Breast epithelium (tissue), 4 donors: ENCODE measurements at regions of chr2 and their contacts with region 1.

Region 1: GRCh38 chr2:225865468-225865867 is 466.0 kb downstream of the NYAP2 start:
- DNase-seq: no peak
- H3K4me3 ChIP-seq: no peak overlapping the region
- H3K27ac ChIP-seq: no peak overlapping the region
- H3K4me1 ChIP-seq: no peaks in the 10 kb centered on the region
- H3K27me3 ChIP-seq: no peaks in the 10 kb centered on the region
- CTCF ChIP-seq: no peak
- POLR2A ChIP-seq: no peak

Region 2: DNA sequence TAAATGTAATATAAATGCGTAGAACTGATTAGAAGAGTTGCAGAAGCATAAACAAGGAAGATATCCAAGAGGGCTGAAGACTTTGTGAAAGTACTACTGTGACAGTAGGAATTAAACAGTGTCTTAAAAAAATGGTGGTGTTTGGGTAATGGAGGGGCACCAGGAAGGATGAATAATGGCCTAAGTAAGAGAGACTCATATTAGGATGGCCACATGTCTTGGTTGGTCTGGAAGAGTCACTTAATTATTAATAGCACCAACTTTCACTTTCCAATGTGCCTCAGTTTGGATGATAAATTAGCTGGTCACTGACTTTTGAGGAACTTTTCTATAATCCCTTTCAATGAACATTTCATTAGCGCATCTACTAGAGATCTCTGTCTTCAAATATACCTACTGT is 93.8 kb before region 1 on chr2:
- intact Hi-C with region 1: no loop called
- DNase-seq: no peak
- H3K4me3 ChIP-seq: no peak overlapping the region
- H3K27ac ChIP-seq: no peak overlapping the region
- H3K4me1 ChIP-seq: no peaks in the 10 kb centered on the region
- H3K27me3 ChIP-seq: no peaks in the 10 kb centered on the region
- CTCF ChIP-seq: no peak
- POLR2A ChIP-seq: no peak

Region 3: GRCh38 chr2:225971433-225971832 is 106.0 kb after region 1 on chr2:
- intact Hi-C with region 1: no loop called
- DNase-seq: no peak
- H3K4me3 ChIP-seq: no peak overlapping the region
- H3K27ac ChIP-seq: no peak overlapping the region
- H3K4me1 ChIP-seq: no peaks in the 10 kb centered on the region
- H3K27me3 ChIP-seq: no peaks in the 10 kb centered on the region
- CTCF ChIP-seq: no peak
- POLR2A ChIP-seq: no peak

Region 4: GRCh38 chr2:226030788-226031646 is 165.5 kb after region 1 on chr2:
- intact Hi-C with region 1: loop called (anchors 5 kb)
- DNase-seq: peak; percentile 37 to 57
- H3K4me3 ChIP-seq: peak overlapping the region; percentile 41 to 77 (median 55)
- H3K27ac ChIP-seq: peak overlapping the region; percentile 30 to 68
- H3K4me1 ChIP-seq: no peaks in the 10 kb centered on the region
- H3K27me3 ChIP-seq: no peaks in the 10 kb centered on the region
- CTCF ChIP-seq: no peak
- POLR2A ChIP-seq: no peak